ENCODE measurements at regions of chr2 and their contacts with region 1.

Region 1: DNA sequence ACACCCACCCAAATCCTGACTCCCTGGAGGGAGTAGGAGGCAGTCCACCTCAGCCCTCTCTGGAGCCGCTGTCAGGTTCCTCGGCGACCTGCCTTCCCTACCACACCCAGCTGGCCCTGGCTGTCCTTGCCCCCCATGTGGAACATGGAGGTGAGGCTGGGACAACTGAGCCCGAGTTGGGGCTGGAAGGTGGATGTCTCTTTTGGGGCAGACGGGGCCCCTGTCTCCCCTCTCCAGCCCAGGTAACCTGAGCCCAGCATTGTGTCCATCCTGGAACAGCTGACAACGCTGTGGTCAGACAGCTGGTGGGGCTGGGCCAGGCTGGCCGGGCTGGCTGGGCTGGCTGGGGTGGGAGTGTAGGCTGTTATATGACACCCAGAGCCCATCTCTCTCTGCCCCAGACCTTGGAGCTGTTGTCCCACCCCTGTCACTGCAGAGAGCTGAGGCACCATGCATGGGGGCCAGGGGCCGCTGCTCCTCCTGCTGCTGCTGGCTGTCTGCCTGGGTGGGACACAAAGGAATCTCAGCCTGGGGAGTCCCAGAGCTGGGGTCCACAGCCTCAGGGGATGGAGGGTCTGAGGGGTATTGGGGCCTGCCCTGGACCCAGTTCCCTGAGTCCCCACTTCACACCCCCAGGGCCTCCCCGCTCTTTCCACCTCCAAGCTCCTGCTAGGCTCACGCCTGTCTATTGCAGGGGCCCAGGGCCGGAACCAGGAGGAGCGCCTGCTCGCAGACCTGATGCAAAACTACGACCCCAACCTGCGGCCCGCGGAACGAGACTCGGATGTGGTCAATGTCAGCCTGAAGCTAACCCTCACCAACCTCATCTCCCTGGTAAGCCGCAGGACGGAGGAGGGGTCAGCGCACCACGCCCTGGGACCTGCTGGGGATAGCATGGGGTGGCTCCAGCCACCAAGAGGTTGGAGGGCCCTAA is at the start of gene CHRNG:
- DNase-seq: no peak
- H3K4me3 Mint-ChIP-seq: no peak within 1 kb of the TSS
- H3K27ac Mint-ChIP-seq: no peak within 1 kb of the TSS
- H3K4me1 Mint-ChIP-seq: no peaks in the 10 kb centered on the region
- H3K27me3 Mint-ChIP-seq: peaks cover 46% of the 10 kb centered on the region
- CTCF ChIP-seq: no peak
- total RNA-seq, gene CHRNG: not detected in 2 replicates

Region 2: DNA sequence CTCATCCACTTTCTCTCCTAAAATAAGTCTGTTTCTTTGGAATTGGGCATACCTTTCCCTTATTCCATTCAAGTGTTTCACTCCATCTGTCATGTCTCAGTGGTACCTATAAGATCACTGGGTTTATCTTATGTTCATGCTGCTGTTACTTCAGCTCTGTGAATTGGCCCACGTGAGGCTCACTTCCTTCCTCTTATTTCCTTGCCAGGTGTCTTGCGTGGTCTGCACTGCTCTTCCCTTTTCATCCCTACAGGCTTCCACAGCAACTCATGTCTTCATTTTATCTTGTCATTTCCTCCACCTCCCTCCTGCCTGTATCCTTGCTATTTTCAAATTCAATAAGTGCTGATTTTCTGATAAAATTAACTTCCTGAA is 320.1 kb before region 1 on chr2:
- CTCF ChIA-PET with region 1: interaction called, 12 read pairs
- intact Hi-C with region 1: no loop called
- DNase-seq: no peak
- H3K4me3 Mint-ChIP-seq: no peak overlapping the region
- H3K27ac Mint-ChIP-seq: no peak overlapping the region
- H3K4me1 Mint-ChIP-seq: no peaks in the 10 kb centered on the region
- H3K27me3 Mint-ChIP-seq: no peaks in the 10 kb centered on the region
- CTCF ChIP-seq: no peak

Measured in Calu3 (cell line).